ENCODE measurements at regions of chr13 and their contacts with region 1.

Region 1: GRCh38 chr13:94674609-94675348 is 37.6 kb downstream of the SOX21 start:
- DNase-seq: peak; percentile 67 to 79
- H3K4me3 ChIP-seq: no peak overlapping the region
- H3K27ac ChIP-seq: no peak overlapping the region
- H3K4me1 ChIP-seq: no peaks in the 10 kb centered on the region
- H3K27me3 ChIP-seq: peaks cover 0 to 16% (median 0%) of the 10 kb centered on the region in 3 donors
- CTCF ChIP-seq: peak in 5 of 7 experiments; percentile 9 to 66 (median 26)
- EP300 ChIP-seq: no peak
- POLR2A ChIP-seq: no peak

Region 2: GRCh38 chr13:95156208-95156607 is 481.4 kb after region 1 on chr13:
- intact Hi-C with region 1: loop called (anchors 5 kb)
- DNase-seq: peak in 1 of 2 donors; percentile 60
- H3K4me3 ChIP-seq: no peak overlapping the region
- H3K27ac ChIP-seq: no peak overlapping the region
- H3K4me1 ChIP-seq: peaks cover 4 to 24% (median 7%) of the 10 kb centered on the region in 4 donors
- H3K27me3 ChIP-seq: no peaks in the 10 kb centered on the region
- CTCF ChIP-seq: peak in 2 of 7 experiments; percentile 21 to 36
- EP300 ChIP-seq: no peak
- POLR2A ChIP-seq: no peak